Mammary epithelial cell (primary cell): ENCODE measurements at regions of chr15 and their contacts with region 1.

Region 1: DNA sequence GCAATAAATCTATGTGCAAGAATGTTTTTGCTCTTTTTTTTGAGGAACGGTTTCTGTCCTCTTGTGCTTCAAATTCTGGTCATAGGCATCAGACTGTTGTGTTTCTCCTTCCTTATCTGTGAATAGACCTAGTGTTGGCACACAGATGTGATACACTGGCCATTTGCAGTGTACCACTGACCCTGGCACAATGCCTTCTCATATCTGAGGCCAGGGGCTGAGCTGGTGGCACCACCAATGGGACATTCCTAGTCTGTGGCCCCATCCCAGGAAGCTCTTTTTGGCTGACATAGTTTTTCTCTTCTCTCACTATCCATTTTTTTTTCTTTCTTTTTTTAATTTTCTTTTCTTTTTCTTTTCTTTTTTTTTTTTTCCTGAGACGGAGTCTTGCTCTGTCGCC is 40.4 kb downstream of the SH3GL3 start:
- DNase-seq: no peak
- H3K4me3 ChIP-seq: no peak overlapping the region
- H3K27ac ChIP-seq: no peak overlapping the region
- H3K4me1 ChIP-seq: no peaks in the 10 kb centered on the region
- H3K27me3 ChIP-seq: peaks cover 2% of the 10 kb centered on the region
- CTCF ChIP-seq: no peak

Region 2: DNA sequence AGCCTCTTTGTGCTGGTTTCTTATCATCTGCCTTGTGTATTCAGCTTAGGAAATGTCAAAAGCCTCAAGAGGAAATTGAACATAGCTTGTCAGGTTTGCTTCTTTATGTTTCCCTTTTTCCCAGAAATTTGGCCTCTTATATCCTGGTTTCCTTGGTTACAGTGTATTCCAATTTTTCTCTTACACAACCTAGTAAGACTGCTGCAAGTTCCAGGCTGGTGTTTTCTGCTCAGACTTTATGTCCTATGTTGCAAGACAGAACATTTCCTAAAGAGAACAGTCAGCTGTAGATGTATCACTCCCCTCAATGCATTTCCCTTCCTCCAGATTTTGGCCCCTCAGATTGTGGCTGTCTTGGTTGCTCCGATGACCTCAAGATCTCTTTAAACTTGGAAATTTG is 62.1 kb after region 1 on chr15:
- CTCF ChIA-PET with region 1: no interaction called
- dilution Hi-C with region 1: no loop called
- in situ Hi-C with region 1: no loop called
- intact Hi-C with region 1: loop called (anchors 5 kb)
- DNase-seq: no peak
- H3K4me3 ChIP-seq: no peak overlapping the region
- H3K27ac ChIP-seq: no peak overlapping the region
- H3K4me1 ChIP-seq: no peaks in the 10 kb centered on the region
- H3K27me3 ChIP-seq: no peaks in the 10 kb centered on the region
- CTCF ChIP-seq: no peak